ENCODE measurements at regions of chr16 and their contacts with region 1.

Region 1: GRCh38 chr16:29815793-29816693 is at the start of gene PAGR1:
- DNase-seq: peak; percentile 98 to 99
- ATAC-seq: peak; percentile 82 to 91 (median 86)
- H3K4me3 ChIP-seq: peak within 1 kb of the TSS; percentile 57 to 80 (median 71)
- H3K27ac ChIP-seq: peak within 1 kb of the TSS; percentile 77 to 96 (median 90)
- H3K4me1 ChIP-seq: peaks cover 8 to 78% (median 65%) of the 10 kb centered on the region in 9 donors
- H3K27me3 ChIP-seq: peaks cover 0 to 16% (median 0%) of the 10 kb centered on the region in 7 donors
- CTCF ChIP-seq: peak; percentile 78 to 97 (median 91)
- total RNA-seq, gene PAGR1: 9.6 to 14.8 (median 12.0) TPM

Region 2: GRCh38 chr16:29745853-29746345 is 70.1 kb before region 1 on chr16 and contains the start of gene C16orf54:
- intact Hi-C with region 1: no loop called
- DNase-seq: peak; percentile 58 to 63
- ATAC-seq: peak; percentile 79 to 91 (median 87)
- H3K4me3 ChIP-seq: peak within 1 kb of the TSS in 6 of 10 donors; percentile 23 to 72 (median 38)
- H3K27ac ChIP-seq: peak within 1 kb of the TSS in 3 of 10 donors; percentile 27 to 93 (median 62)
- H3K4me1 ChIP-seq: peaks cover 0 to 37% (median 0%) of the 10 kb centered on the region in 9 donors
- H3K27me3 ChIP-seq: peaks cover 0 to 11% (median 0%) of the 10 kb centered on the region in 7 donors
- CTCF ChIP-seq: no peak
- total RNA-seq, gene C16orf54: 0.18 to 3.3 (median 0.65) TPM

Region 3: DNA sequence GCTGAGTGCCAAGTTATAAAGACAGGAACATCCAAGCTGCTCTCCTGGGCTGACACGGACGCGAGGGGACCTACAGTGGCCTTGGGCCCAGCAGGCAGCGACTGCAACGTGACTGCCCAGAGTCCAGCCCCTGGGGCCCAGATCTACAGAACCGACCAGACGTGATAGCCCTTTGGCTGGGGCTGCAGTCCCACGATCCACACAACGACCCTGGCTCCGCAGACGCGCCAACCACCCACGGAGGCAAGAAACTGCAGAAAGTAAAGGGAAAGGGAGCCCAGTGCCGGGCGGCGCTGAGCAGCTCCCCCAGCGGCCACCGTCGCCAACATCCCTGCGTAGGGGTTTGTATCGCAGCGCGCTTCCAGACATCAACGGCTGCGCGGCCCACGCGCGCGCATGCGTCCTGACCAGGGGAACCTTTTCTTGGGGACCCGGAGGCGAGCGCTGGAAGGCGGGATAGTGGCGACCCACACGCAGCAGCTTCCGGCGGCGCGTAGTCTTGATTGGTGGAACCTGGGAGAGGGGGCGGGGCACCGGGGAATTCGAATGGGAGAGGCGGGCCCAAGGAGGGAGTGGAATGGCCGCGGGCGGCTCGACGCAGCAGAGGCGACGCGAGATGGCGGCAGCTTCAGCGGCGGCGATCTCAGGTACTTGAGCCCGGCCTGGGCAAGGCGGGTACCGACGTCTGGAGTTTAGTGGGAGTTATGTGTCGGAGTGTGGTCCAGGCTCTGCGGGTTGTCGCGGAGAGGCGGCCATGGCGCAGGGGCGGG is 25.7 kb before region 1 on chr16 and contains the start of gene KIF22:
- intact Hi-C with region 1: loop called in 1 of 10 experiments (anchors 1 kb)
- DNase-seq: peak; percentile 99 to 100
- ATAC-seq: peak; percentile 99 to 100 (median 99)
- H3K4me3 ChIP-seq: peak within 1 kb of the TSS; percentile 56 to 98 (median 83)
- H3K27ac ChIP-seq: peak within 1 kb of the TSS; percentile 55 to 97 (median 90)
- H3K4me1 ChIP-seq: peaks cover 10 to 31% (median 24%) of the 10 kb centered on the region in 9 donors
- H3K27me3 ChIP-seq: no peaks in the 10 kb centered on the region
- CTCF ChIP-seq: peak; percentile 40 to 89 (median 77)
- total RNA-seq, gene KIF22: 28.6 to 48.2 (median 38.6) TPM

Region 4: GRCh38 chr16:29848420-29849297 is 32.6 kb after region 1 on chr16:
- intact Hi-C with region 1: loop called in 1 of 10 experiments (anchors 5 kb)
- DNase-seq: peak; percentile 68 to 86
- ATAC-seq: peak; percentile 70 to 82 (median 76)
- H3K4me3 ChIP-seq: no peak overlapping the region
- H3K27ac ChIP-seq: peak overlapping the region in 1 of 10 donors; percentile 16
- H3K4me1 ChIP-seq: peaks cover 0 to 20% (median 0%) of the 10 kb centered on the region in 9 donors
- H3K27me3 ChIP-seq: no peaks in the 10 kb centered on the region
- CTCF ChIP-seq: peak; percentile 86 to 96 (median 91)

Region 5: GRCh38 chr16:29862884-29863668 is 47.0 kb after region 1 on chr16 and contains the start of gene CDIPT:
- intact Hi-C with region 1: loop called in 6 of 10 experiments (anchors 1 to 5 kb)
- DNase-seq: peak; percentile 91 to 96
- ATAC-seq: peak; percentile 97 to 99 (median 98)
- H3K4me3 ChIP-seq: peak within 1 kb of the TSS; percentile 65 to 99 (median 91)
- H3K27ac ChIP-seq: peak within 1 kb of the TSS; percentile 85 to 98 (median 94)
- H3K4me1 ChIP-seq: peaks cover 8 to 25% (median 19%) of the 10 kb centered on the region in 9 donors
- H3K27me3 ChIP-seq: no peaks in the 10 kb centered on the region
- CTCF ChIP-seq: peak; percentile 17 to 76 (median 52)
- total RNA-seq, gene CDIPT: 61.8 to 87.0 (median 72.7) TPM

Region 6: DNA sequence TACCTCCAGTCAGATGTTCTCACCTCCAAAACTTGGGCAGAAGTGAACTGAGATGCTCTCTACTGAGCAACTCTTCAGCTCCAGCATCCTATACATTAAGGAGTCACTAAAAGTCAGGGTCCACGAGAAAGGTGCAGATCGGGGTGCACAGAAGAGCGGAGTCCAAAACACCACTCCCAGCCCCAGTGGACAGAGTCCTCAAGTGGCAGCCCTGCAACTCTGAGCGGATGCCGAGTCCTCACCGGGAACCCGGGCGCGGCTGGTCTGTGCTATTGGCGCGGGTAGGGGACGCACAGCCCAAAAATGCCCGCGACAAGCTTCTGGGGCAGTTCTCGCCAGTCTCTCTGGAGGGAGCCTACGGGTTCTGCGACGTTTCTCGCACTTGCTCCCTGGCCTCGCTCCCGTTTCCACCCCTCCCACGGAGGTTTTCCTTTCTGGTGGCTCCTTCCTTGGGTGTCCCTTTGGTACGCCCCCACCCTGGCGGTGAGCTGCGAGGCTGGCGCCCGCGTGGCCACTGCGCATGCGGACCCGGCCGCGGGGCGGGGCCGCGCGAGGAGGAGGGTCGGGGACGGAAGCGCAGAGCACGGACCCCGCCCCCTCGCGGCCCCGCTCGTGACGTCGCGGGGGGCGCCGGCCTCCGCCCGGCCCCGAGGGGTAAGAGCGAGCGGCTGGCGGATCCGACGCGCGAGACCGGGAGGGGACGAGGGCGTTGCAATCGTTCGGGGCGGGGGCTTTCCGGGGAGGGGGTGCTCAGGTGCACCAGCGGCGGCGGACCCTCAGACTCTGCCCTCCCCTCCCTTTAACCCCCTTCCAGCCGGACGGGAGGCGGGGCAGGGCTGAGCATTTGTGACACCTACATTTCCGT is 145.7 kb after region 1 on chr16 and contains the start of gene TMEM219:
- intact Hi-C with region 1: loop called in 1 of 10 experiments (anchors 10 kb)
- DNase-seq: peak; percentile 92 to 94
- ATAC-seq: peak; percentile 95 to 99 (median 97)
- H3K4me3 ChIP-seq: peak within 1 kb of the TSS; percentile 46 to 94 (median 81)
- H3K27ac ChIP-seq: peak within 1 kb of the TSS; percentile 93 to 98 (median 96)
- H3K4me1 ChIP-seq: peaks cover 0 to 35% (median 20%) of the 10 kb centered on the region in 9 donors
- H3K27me3 ChIP-seq: no peaks in the 10 kb centered on the region
- CTCF ChIP-seq: peak; percentile 29 to 69 (median 46)
- total RNA-seq, gene TMEM219: 53.0 to 105 (median 67.1) TPM

Region 7: GRCh38 chr16:29973384-29974246 is 157.6 kb after region 1 on chr16 and contains the start of gene TAOK2:
- intact Hi-C with region 1: loop called in 2 of 10 experiments (anchors 10 kb)
- DNase-seq: peak; percentile 99
- ATAC-seq: peak; percentile 96 to 98 (median 98)
- H3K4me3 ChIP-seq: peak within 1 kb of the TSS; percentile 69 to 99 (median 81)
- H3K27ac ChIP-seq: peak within 1 kb of the TSS; percentile 85 to 100 (median 94)
- H3K4me1 ChIP-seq: peaks cover 3 to 49% (median 38%) of the 10 kb centered on the region in 9 donors
- H3K27me3 ChIP-seq: no peaks in the 10 kb centered on the region
- CTCF ChIP-seq: peak in 1 of 9 donors; percentile 5
- total RNA-seq, gene TAOK2: 27.0 to 40.6 (median 32.7) TPM

Region 8: GRCh38 chr16:29995911-29996772 is 180.1 kb after region 1 on chr16 and contains the start of gene INO80E:
- intact Hi-C with region 1: loop called in 1 of 10 experiments (anchors 10 kb)
- DNase-seq: peak; percentile 99 to 100
- ATAC-seq: peak; percentile 98 to 99 (median 99)
- H3K4me3 ChIP-seq: peak within 1 kb of the TSS; percentile 55 to 97 (median 82)
- H3K27ac ChIP-seq: peak within 1 kb of the TSS; percentile 87 to 99 (median 96)
- H3K4me1 ChIP-seq: peaks cover 7 to 40% (median 28%) of the 10 kb centered on the region in 9 donors
- H3K27me3 ChIP-seq: no peaks in the 10 kb centered on the region
- CTCF ChIP-seq: peak in 1 of 9 donors; percentile 18
- total RNA-seq, gene INO80E: 23.2 to 34.8 (median 30.6) TPM

Region 9: GRCh38 chr16:30698139-30698815 is 882.2 kb after region 1 on chr16:
- intact Hi-C with region 1: no loop called
- DNase-seq: peak; percentile 99
- ATAC-seq: peak; percentile 86 to 94 (median 90)
- H3K4me3 ChIP-seq: peak overlapping the region; percentile 84 to 100 (median 94)
- H3K27ac ChIP-seq: peak overlapping the region; percentile 97 to 100 (median 100)
- H3K4me1 ChIP-seq: peaks cover 0 to 43% (median 31%) of the 10 kb centered on the region in 9 donors
- H3K27me3 ChIP-seq: no peaks in the 10 kb centered on the region
- CTCF ChIP-seq: no peak

Measured in heart right ventricle (tissue), 16 donors.